Aorta (tissue), 5 donors: ENCODE measurements at regions of chr14 and their contacts with region 1.

Region 1: GRCh38 chr14:64338616-64339316 is 44.6 kb upstream of the ESR2 start:
- DNase-seq: peak; percentile 95 to 97
- ATAC-seq: peak; percentile 94
- H3K4me3 ChIP-seq: peak overlapping the region; percentile 47 to 51
- H3K27ac ChIP-seq: peak overlapping the region in 1 of 2 donors; percentile 71
- H3K4me1 ChIP-seq: no peaks in the 10 kb centered on the region
- H3K27me3 ChIP-seq: no peaks in the 10 kb centered on the region

Region 2: GRCh38 chr14:64200170-64200569 is 138.6 kb before region 1 on chr14:
- intact Hi-C with region 1: no loop called
- DNase-seq: no peak
- ATAC-seq: no peak
- H3K4me3 ChIP-seq: no peak overlapping the region
- H3K27ac ChIP-seq: no peak overlapping the region
- H3K4me1 ChIP-seq: no peaks in the 10 kb centered on the region
- H3K27me3 ChIP-seq: no peaks in the 10 kb centered on the region

Region 3: DNA sequence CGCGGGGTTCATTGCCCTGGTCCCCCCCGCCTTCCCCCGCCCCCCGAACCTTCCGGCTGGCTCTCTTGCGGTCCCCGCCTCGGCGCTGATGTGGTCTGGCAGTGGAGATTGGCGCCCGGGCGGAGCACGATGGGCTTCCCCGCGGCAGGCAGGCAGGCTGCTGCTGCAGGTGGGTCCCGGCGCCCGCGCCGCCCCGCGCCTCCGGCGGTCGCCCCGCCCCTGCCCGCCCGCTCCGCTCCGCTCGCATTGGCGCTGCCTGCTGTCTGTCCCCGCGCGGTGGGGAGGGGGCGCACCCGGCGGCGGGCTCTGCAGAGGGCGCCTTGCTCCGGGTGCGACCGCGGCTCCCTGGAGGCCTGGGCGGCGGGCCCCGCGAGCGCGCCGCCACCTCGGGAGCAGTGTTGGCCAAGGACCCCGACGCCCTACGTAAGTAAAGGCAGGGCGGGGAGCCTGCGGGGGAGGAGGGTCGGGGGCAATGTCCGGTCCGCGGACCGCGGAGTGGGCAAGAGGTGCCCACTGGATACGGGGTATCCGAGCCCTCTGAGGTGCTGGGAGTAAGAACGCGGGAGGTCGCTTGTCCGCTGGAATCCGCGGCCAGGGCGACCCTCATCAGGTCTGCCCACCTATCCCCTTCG is 126.5 kb after region 1 on chr14 and contains the start of gene AKAP5:
- intact Hi-C with region 1: loop called in 1 of 2 experiments (anchors 2 kb)
- DNase-seq: peak; percentile 55 to 87
- ATAC-seq: peak; percentile 79
- H3K4me3 ChIP-seq: peak within 1 kb of the TSS; percentile 93 to 96
- H3K27ac ChIP-seq: peak within 1 kb of the TSS; percentile 67 to 78
- H3K4me1 ChIP-seq: peaks cover 0 to 1% of the 10 kb centered on the region in 2 donors
- H3K27me3 ChIP-seq: no peaks in the 10 kb centered on the region
- total RNA-seq, gene AKAP5: 2.8 to 2.9 TPM